KBM-7 (cell line): ENCODE measurements at regions of chr20 and their contacts with region 1.

Region 1: DNA sequence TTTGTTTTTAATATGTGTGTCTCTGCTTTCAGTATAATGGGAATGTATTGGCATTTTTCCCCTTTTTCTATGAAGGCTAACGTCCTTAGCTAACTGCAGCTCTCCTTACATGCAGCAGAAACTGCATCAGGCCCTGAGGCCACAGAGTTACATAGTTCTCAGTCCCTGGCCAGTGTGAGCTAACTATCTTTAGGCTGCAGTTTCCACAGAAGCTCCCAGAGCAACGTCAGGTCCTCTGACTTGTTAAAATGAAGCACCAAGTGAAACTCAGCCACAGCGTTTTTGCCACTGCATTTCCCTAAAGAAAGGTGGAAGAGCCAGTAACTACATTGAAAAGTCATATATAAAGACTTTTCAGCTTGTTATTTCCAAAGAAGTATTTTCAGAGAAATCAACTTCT is 244.7 kb downstream of the CBLN4 start:
- DNase-seq: no peak

Region 2: GRCh38 chr20:55667955-55668354 is 92.6 kb before region 1 on chr20:
- in situ Hi-C with region 1: loop called (anchors 25 kb)
- DNase-seq: no peak